Left colon (tissue), 2 donors: ENCODE measurements at regions of chr12 and their contacts with region 1.

Region 1: GRCh38 chr12:21677622-21678277 is 20.1 kb upstream of the LDHB start:
- DNase-seq: no peak
- ATAC-seq: no peak

Region 2: DNA sequence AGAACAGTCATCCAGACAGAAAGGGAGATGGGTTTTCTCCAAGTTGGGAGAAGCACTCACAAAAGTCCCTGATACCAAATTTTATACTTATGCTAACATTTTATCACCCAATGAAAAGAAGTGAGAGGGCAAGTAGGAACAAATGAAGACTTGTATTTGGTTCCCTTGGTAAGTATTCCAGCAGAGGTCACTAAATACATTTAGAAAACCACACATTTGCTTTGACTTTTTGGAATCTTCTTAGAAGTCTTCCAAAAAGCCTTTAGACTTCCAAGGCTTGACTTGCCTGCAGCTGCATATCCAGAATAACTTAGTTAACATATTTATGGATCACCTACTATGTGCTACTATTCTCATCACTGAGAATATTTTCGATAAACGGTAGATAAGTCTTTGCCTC is 70.0 kb before region 1 on chr12:
- intact Hi-C with region 1: loop called in 1 of 2 experiments (anchors 10 kb)
- DNase-seq: no peak
- ATAC-seq: no peak

Region 3: DNA sequence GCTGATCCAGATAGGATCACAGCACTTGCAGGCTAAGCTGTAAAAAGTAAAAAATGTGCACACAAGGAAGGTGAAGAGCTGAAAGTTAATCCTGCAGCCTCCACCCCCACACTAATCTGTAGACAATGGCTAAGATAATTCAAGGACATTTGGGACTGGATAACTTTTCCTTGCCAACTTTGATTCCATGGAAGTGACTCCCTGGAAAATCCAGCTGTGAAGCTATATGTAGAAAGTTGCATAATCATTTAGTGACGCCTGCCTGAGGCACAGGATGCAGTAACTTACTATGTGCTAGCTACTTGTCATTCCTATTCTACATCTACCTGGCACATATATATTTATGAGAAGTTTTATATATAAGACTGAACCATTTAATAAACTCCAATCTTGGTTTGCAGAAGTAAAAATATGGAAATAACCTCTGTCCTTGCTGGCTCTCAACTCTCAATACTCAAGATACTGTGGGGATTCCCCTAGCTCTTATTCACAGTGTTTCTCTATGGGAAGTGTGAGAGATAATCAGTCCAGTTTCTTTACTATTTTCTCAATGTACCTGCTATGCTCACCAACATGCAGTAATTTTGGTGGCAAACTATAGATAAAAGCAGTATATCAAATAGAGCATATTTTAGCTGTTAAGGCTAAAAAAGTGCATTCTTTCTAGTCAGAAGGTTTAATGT is 34.9 kb before region 1 on chr12:
- intact Hi-C with region 1: no loop called
- DNase-seq: no peak
- ATAC-seq: no peak

Region 4: DNA sequence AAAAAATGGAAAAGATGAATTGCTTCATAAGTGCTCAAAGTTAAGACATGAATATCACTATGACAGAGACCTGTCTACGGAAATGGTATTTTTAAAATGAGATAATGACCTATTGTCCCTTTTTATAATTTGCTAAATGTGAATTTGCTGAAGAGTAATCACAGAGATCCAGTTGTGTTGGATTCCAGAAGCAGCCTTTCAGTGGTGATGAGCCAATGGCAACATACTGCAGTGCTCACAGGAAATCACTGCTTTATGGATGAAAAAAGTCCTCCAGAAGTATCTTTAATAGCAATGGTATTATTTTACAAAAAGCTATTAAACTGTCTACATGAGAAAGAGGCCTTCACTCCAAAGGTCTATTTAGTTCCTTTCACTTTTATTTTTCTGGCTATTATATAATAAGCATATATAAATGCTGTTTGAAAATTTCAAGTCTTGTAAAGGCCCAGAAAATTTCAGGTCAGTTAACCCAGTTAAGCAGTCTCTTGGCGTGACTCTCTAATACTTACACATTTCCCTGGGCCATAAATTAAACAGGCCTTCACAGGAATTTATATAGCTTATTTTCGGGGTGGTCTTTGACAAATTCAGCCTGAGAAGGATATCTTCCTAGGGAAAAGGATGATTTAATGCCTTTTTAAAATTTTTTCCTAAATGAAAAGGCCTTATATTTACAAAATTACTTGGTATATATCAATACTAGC is 41.3 kb after region 1 on chr12:
- intact Hi-C with region 1: no loop called
- DNase-seq: no peak
- ATAC-seq: no peak

Region 5: DNA sequence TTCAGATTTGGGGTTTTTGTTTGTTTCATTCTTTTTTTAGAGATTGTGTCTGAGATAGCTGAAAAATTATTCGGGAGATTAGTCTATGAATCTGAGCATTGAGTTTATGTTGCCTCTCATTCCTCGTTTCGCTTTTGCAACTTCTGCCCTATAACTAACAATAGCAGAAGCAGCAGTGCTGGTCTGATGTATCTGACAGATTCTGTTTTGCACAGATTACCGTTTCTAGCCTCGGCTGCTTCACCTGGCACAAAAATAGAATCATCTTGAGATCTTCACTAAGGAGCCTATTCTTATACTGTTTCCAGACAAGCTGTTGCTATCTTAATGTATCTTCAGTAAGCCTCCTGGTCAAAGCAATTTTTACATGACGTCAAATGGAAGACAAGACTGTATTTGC is 67.5 kb after region 1 on chr12:
- intact Hi-C with region 1: no loop called
- DNase-seq: no peak
- ATAC-seq: no peak